Mammary epithelial cell (primary cell): ENCODE measurements at regions of chr19 and their contacts with region 1.

Region 1: GRCh38 chr19:45955905-45956608 is 17.6 kb downstream of the NOVA2 start:
- DNase-seq: peak; percentile 79
- H3K4me3 ChIP-seq: no peak overlapping the region
- H3K27ac ChIP-seq: no peak overlapping the region
- H3K4me1 ChIP-seq: peaks cover 24% of the 10 kb centered on the region
- H3K27me3 ChIP-seq: no peaks in the 10 kb centered on the region
- CTCF ChIP-seq: no peak

Region 2: DNA sequence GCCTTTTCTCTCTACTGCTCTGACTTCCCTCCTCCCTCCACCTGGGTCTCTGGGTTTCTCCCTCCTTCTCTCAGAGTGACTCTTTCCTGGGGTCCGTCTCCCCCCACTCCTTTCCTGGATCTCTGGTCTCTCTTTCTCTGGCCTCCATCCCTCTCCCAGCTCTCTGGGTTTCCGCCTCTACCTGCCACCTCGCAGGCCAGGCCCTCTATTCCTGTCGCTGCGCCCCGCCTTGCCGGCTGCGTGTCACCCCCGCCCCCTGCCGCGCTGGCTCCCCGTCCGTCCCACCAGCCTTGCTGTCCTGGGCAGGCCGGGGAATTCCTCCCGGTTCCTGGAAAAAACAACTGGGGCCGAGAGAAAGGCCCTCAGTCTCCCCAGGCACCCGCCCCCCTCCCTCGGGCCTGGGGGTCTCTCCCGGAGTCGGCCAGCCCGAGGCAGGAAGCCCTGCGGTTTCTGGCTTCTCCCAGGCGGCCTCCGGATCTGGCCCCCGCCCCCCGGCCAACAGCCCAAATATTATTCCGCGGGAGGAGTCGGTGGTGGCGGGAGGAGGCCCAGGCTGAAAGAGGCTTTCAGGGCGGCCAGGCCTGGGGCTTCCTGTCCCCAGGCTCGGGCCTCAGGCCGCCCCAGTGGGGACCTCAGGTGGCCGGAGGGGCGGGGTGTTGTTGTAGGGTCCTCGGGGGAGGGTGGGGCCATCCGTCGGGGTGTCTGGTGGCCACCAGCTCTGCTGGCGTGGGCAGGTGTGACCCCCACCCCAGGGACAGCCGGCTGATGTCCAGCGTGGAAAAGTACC is 79.5 kb before region 1 on chr19:
- CTCF ChIA-PET with region 1: no interaction called
- dilution Hi-C with region 1: no loop called
- in situ Hi-C with region 1: no loop called
- intact Hi-C with region 1: no loop called
- DNase-seq: no peak
- H3K4me3 ChIP-seq: no peak overlapping the region
- H3K27ac ChIP-seq: no peak overlapping the region
- H3K4me1 ChIP-seq: peaks cover 2% of the 10 kb centered on the region
- H3K27me3 ChIP-seq: no peaks in the 10 kb centered on the region
- CTCF ChIP-seq: no peak

Region 3: DNA sequence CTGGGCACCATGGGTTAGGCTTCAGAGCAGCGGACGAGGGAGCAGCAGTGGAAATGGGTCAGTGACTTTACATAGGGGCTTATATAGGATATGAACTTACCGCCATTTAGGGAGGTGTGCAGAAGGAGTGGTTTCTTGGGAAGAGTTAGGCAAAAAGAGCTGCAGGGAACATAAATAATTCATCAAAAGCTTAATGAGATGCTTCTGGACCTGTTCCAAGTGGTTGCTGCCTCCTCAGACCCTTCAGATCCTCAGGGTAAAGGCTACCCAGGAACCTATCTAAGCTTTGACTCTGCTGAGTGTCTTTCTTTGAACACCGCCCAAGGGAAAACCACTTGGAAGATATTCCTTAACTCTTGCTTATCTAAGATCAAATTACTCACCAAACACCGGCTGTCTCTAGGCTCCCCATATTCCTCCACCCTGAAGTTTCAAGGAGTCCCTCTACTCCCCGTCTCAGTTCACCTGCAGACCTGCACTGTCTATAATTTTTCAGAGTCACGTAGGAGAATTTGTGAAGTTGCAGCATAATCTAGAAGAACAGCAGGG is 85.0 kb after region 1 on chr19 and contains the start of gene IGFL4:
- CTCF ChIA-PET with region 1: no interaction called
- dilution Hi-C with region 1: loop called (anchors 5 kb)
- in situ Hi-C with region 1: no loop called
- intact Hi-C with region 1: no loop called
- DNase-seq: peak; percentile 64
- H3K4me3 ChIP-seq: no peak within 1 kb of the TSS
- H3K27ac ChIP-seq: no peak within 1 kb of the TSS
- H3K4me1 ChIP-seq: peaks cover 10% of the 10 kb centered on the region
- H3K27me3 ChIP-seq: no peaks in the 10 kb centered on the region
- CTCF ChIP-seq: no peak
- total RNA-seq, gene IGFL4: 1.5 TPM in 1 of 2 donors, not detected in the other